AG04450 (cell line): ENCODE measurements at regions of chr19 and their contacts with region 1.

Region 1: GRCh38 chr19:29966588-29967249 is 24.7 kb downstream of the URI1 start:
- DNase-seq: no peak
- H3K4me3 ChIP-seq: no peak overlapping the region
- H3K27ac ChIP-seq: no peak overlapping the region
- H3K27me3 ChIP-seq: no peaks in the 10 kb centered on the region
- CTCF ChIP-seq: peak; percentile 52

Region 2: GRCh38 chr19:29836409-29836825 is 130.3 kb before region 1 on chr19:
- CTCF ChIA-PET with region 1: no interaction called
- POLR2A ChIA-PET with region 1: no interaction called
- DNase-seq: no peak
- H3K4me3 ChIP-seq: no peak overlapping the region
- H3K27ac ChIP-seq: no peak overlapping the region
- H3K27me3 ChIP-seq: peaks cover 13% of the 10 kb centered on the region
- CTCF ChIP-seq: no peak

Region 3: GRCh38 chr19:29867984-29868383 is 98.7 kb before region 1 on chr19:
- CTCF ChIA-PET with region 1: no interaction called
- POLR2A ChIA-PET with region 1: no interaction called
- DNase-seq: no peak
- H3K4me3 ChIP-seq: no peak overlapping the region
- H3K27ac ChIP-seq: no peak overlapping the region
- H3K27me3 ChIP-seq: peaks cover 2% of the 10 kb centered on the region
- CTCF ChIP-seq: no peak

Region 4: GRCh38 chr19:29893606-29894284 is 73.0 kb before region 1 on chr19:
- CTCF ChIA-PET with region 1: no interaction called
- POLR2A ChIA-PET with region 1: no interaction called
- DNase-seq: no peak
- H3K4me3 ChIP-seq: no peak overlapping the region
- H3K27ac ChIP-seq: no peak overlapping the region
- H3K27me3 ChIP-seq: no peaks in the 10 kb centered on the region
- CTCF ChIP-seq: no peak

Region 5: DNA sequence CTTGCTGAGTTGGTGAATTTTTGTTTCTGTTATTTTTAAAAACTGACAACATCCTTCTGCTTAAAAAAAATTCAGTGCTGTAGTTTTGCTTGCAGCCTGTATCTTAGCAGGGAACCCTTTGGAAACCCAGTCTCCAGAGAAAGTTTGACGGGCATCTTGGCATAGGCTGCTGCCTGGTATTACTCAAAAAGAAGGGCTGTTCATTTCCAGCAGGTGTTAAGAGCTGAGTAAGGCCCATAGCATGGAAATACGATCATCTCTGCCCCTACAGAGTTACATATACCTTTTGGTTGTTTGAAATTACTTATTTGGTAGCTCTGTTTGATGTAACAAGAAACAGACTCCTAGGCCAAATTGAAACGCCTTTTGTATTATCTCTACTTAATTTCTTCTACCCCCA is 16.8 kb after region 1 on chr19:
- CTCF ChIA-PET with region 1: interaction called, 11 read pairs
- POLR2A ChIA-PET with region 1: no interaction called
- DNase-seq: no peak
- H3K4me3 ChIP-seq: no peak overlapping the region
- H3K27ac ChIP-seq: no peak overlapping the region
- H3K27me3 ChIP-seq: no peaks in the 10 kb centered on the region
- CTCF ChIP-seq: no peak